Mammary epithelial cell (primary cell): ENCODE measurements at regions of chr16 and their contacts with region 1.

Region 1: DNA sequence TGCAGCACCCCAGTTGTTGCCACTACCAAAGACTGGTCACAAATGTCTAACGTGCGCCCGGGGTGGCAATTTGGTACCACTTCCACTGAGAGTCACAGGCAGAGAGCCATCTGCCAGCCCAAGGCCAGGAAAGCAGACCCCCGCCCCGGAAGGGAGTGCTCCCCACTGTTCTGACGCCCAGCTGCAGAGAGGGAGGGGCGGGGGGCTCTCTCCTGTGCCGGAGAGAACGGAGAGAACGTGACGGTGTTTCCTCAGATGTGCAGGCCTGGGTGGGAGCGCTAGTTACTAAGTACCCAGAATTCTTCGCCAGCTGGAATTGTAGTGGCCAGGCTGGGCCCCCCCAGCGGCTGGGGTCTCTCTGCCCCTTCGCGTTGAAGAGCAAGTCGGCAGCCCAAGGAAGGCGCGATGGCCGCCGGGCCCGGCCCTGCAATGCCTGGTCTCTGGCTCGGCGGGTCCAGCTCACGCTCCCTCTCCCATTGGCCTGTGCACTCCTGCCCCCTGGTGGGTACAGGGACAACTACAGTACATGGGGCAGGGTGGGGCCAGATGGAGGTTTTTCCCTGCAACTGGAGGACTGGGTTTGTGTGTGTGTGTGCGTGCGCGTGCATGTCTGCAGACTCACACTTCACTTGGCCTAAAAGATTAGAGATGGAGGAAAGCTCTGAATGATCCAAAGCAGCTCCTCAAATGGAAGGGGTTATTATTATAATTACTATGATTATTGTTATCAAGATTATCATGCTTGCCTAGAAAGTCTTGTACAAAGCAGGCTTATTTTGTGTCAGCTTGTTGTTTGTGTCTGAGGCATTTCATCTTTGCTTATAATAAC is 107.1 kb downstream of the AMFR start:
- DNase-seq: peak; percentile 73
- H3K4me3 ChIP-seq: peak overlapping the region in 1 of 3 experiments; percentile 25
- H3K27ac ChIP-seq: no peak overlapping the region
- H3K4me1 ChIP-seq: peaks cover 2% of the 10 kb centered on the region
- H3K27me3 ChIP-seq: no peaks in the 10 kb centered on the region
- CTCF ChIP-seq: peak; percentile 89 to 93

Region 2: DNA sequence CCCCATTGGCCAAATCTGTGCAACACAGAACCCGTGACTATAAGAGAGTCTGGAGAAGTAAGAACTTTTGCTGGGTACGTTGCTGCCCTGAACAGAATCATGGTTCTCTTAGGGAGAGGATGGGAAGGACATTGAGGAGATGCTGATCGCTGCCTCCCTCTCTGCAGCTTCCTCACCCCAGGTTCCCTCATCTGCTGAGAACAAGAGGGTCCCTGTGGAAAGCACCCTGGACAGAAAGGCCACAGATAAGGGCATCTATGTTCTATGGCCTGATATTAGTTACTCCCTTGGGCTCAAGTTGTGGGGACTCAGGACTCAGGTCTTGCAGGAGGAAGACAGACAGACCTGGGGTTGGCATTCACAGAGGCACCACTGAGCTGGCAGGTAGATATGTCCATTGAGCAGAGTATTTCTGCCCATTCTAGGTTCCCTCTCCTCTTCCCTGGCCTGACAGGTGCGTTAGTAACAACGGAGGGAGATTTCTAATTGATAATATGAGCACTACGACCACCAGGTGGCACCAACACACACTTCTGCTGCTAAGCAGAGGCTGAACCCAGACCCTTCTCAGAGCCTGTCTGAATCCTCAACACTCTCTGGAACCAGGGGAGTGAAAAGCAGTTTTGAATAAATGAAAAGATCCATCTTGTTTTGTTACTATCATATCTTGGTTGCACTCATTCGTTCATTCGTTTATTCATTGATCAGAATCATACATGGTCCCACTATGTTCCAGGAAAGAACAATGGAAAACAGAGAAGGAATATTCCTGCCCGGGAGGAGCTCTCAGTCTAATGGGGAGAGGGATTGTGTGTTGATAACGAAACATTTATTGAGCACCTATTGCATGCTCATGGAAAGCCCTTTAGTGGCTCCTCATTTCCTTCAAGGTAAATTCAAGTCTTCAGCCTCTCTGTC is 606.0 kb before region 1 on chr16:
- CTCF ChIA-PET with region 1: no interaction called
- dilution Hi-C with region 1: no loop called
- in situ Hi-C with region 1: loop called in 1 of 2 experiments (anchors 25 kb)
- intact Hi-C with region 1: loop called (anchors 1 kb)
- DNase-seq: peak; percentile 29
- H3K4me3 ChIP-seq: no peak overlapping the region
- H3K27ac ChIP-seq: no peak overlapping the region
- H3K4me1 ChIP-seq: no peaks in the 10 kb centered on the region
- H3K27me3 ChIP-seq: peaks cover 3% of the 10 kb centered on the region
- CTCF ChIP-seq: peak; percentile 57 to 68

Region 3: DNA sequence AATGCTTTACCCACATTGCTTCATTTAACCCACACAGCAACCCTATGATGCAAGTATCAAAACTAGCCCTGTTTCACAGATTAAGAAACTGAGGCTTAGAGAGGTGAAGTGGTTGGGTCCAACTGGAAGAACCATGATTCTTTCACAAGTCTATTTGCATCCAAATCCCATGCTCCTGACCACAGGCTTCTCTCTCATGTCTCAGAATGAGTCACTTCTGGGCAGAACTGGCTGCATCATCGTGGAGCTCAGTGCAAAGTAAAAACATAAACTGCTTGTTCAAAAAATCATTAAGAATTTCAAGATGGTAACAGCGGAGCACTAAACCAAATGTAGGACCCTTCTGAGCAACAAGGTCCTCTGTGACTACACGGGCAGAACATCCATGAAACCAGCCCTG is 465.1 kb before region 1 on chr16:
- CTCF ChIA-PET with region 1: no interaction called
- dilution Hi-C with region 1: no loop called
- in situ Hi-C with region 1: no loop called
- intact Hi-C with region 1: loop called (anchors 2 kb)
- DNase-seq: peak; percentile 42
- H3K4me3 ChIP-seq: no peak overlapping the region
- H3K27ac ChIP-seq: no peak overlapping the region
- H3K4me1 ChIP-seq: no peaks in the 10 kb centered on the region
- H3K27me3 ChIP-seq: no peaks in the 10 kb centered on the region
- CTCF ChIP-seq: no peak

Region 4: GRCh38 chr16:55944377-55944802 is 373.8 kb before region 1 on chr16:
- CTCF ChIA-PET with region 1: no interaction called
- dilution Hi-C with region 1: no loop called
- in situ Hi-C with region 1: loop called (anchors 10 kb)
- intact Hi-C with region 1: loop called (anchors 1 kb)
- DNase-seq: peak; percentile 19
- H3K4me3 ChIP-seq: no peak overlapping the region
- H3K27ac ChIP-seq: no peak overlapping the region
- H3K4me1 ChIP-seq: no peaks in the 10 kb centered on the region
- H3K27me3 ChIP-seq: no peaks in the 10 kb centered on the region
- CTCF ChIP-seq: peak; percentile 93 to 96

Region 5: DNA sequence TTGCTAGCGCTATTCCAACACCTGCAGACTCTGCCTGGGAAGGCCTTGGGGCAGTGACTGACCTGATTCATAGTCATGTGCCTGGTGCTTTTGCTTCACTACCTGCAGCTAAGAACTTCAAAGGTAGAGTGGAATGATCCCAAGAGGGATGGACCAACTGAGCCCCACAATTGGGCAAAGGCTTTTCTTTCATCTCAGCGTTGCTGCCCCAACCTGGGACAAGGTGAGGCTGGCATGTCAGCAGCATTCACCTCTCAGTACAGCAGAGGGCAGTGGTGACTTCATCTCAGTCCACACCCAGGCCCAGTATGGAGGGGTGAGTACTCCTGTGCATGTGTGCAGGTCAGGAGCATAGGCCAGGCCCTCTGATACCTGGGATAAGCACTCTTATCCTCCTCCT is 276.5 kb before region 1 on chr16:
- CTCF ChIA-PET with region 1: interaction called, 3 read pairs
- dilution Hi-C with region 1: no loop called
- in situ Hi-C with region 1: loop called (anchors 10 to 25 kb)
- intact Hi-C with region 1: loop called (anchors 1 kb)
- DNase-seq: peak; percentile 36
- H3K4me3 ChIP-seq: no peak overlapping the region
- H3K27ac ChIP-seq: no peak overlapping the region
- H3K4me1 ChIP-seq: no peaks in the 10 kb centered on the region
- H3K27me3 ChIP-seq: no peaks in the 10 kb centered on the region
- CTCF ChIP-seq: peak; percentile 52 to 82

Region 6: GRCh38 chr16:56356276-56357240 is 38.3 kb after region 1 on chr16:
- CTCF ChIA-PET with region 1: no interaction called
- dilution Hi-C with region 1: no loop called
- in situ Hi-C with region 1: no loop called
- intact Hi-C with region 1: loop called (anchors 5 kb)
- DNase-seq: peak; percentile 67
- H3K4me3 ChIP-seq: peak overlapping the region; percentile 34 to 68 (median 46)
- H3K27ac ChIP-seq: peak overlapping the region; percentile 26
- H3K4me1 ChIP-seq: peaks cover 11% of the 10 kb centered on the region
- H3K27me3 ChIP-seq: no peaks in the 10 kb centered on the region
- CTCF ChIP-seq: peak; percentile 84 to 96